GM12878 (cell line): ENCODE measurements at regions of chr16 and their contacts with region 1.

Region 1: GRCh38 chr16:19067349-19068236 is at the start of gene COQ7:
- DNase-seq: peak; percentile 96
- ATAC-seq: peak; percentile 94
- H3K4me3 ChIP-seq: peak within 1 kb of the TSS; percentile 95
- H3K27ac ChIP-seq: peak within 1 kb of the TSS; percentile 99
- H3K4me1 ChIP-seq: no peaks in the 10 kb centered on the region; the same call in 1 of the 2 replicates
- H3K27me3 ChIP-seq: no peaks in the 10 kb centered on the region
- CTCF ChIP-seq: no peak
- EP300 ChIP-seq: 0 out of 4 replicates have a peak, but pooled peaks of 1 of the 2 experiments have one; percentile 69
- POLR2A ChIP-seq: peak; percentile 80
- RAD21 ChIP-seq: no peak
- polyA plus RNA-seq, gene COQ7: 3.2 to 4.3 TPM

Region 2: GRCh38 chr16:18789850-18790724 is 277.5 kb before region 1 on chr16 and contains the start of gene RPS15A:
- CTCF ChIA-PET with region 1: no interaction called
- POLR2A ChIA-PET with region 1: interaction called, 5 read pairs
- RAD21 ChIA-PET with region 1: no interaction called
- SMC1A ChIA-PET with region 1: interaction called, 3 read pairs
- in situ Hi-C with region 1: no loop called
- intact Hi-C with region 1: loop called (anchors 5 kb)
- DNase-seq: peak; percentile 88
- ATAC-seq: peak; percentile 89
- H3K4me3 ChIP-seq: peak within 1 kb of the TSS; percentile 93
- H3K27ac ChIP-seq: peak within 1 kb of the TSS; percentile 91
- H3K4me1 ChIP-seq: peaks cover 10% of the 10 kb centered on the region
- H3K27me3 ChIP-seq: no peaks in the 10 kb centered on the region
- CTCF ChIP-seq: no peak
- EP300 ChIP-seq: 0 out of 4 replicates have a peak, but pooled peaks of 1 of the 2 experiments have one; percentile 8
- POLR2A ChIP-seq: peak; percentile 99
- RAD21 ChIP-seq: no peak
- polyA plus RNA-seq, gene RPS15A: 2,843 to 3,155 TPM

Region 3: DNA sequence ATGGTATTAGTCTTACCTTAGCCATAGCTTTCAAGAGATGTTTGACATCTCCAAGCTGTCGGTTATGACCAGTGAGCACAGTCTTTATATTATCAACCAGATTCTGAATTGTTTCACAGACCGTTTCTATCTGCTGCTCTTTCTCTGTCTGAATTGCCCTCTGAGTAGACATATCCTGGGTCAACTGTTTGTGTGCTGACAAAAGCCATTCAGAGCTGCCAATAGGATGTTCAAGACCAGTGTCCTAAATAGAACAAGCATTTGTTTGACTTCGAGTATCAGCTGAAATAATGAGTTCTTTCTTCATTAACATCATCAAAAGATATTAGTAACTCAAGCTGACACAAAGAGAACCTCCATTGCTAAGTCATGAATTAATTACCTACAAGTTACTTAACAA is 251.3 kb before region 1 on chr16:
- CTCF ChIA-PET with region 1: no interaction called
- POLR2A ChIA-PET with region 1: interaction called, 11 read pairs
- RAD21 ChIA-PET with region 1: no interaction called
- SMC1A ChIA-PET with region 1: no interaction called
- in situ Hi-C with region 1: no loop called
- intact Hi-C with region 1: no loop called
- DNase-seq: no peak
- ATAC-seq: no peak
- H3K4me3 ChIP-seq: no peak overlapping the region
- H3K27ac ChIP-seq: no peak overlapping the region
- H3K4me1 ChIP-seq: no peaks in the 10 kb centered on the region
- H3K27me3 ChIP-seq: no peaks in the 10 kb centered on the region
- CTCF ChIP-seq: no peak
- EP300 ChIP-seq: no peak
- POLR2A ChIP-seq: no peak
- RAD21 ChIP-seq: no peak

Region 4: GRCh38 chr16:19001788-19002187 is 65.8 kb before region 1 on chr16:
- CTCF ChIA-PET with region 1: no interaction called
- POLR2A ChIA-PET with region 1: no interaction called
- RAD21 ChIA-PET with region 1: no interaction called
- SMC1A ChIA-PET with region 1: no interaction called
- in situ Hi-C with region 1: no loop called
- intact Hi-C with region 1: no loop called
- DNase-seq: no peak
- ATAC-seq: no peak
- H3K4me3 ChIP-seq: no peak overlapping the region
- H3K27ac ChIP-seq: no peak overlapping the region
- H3K4me1 ChIP-seq: no peaks in the 10 kb centered on the region
- H3K27me3 ChIP-seq: no peaks in the 10 kb centered on the region; a peak in 1 of 4 replicates
- CTCF ChIP-seq: no peak
- EP300 ChIP-seq: no peak
- POLR2A ChIP-seq: no peak
- RAD21 ChIP-seq: no peak

Region 5: DNA sequence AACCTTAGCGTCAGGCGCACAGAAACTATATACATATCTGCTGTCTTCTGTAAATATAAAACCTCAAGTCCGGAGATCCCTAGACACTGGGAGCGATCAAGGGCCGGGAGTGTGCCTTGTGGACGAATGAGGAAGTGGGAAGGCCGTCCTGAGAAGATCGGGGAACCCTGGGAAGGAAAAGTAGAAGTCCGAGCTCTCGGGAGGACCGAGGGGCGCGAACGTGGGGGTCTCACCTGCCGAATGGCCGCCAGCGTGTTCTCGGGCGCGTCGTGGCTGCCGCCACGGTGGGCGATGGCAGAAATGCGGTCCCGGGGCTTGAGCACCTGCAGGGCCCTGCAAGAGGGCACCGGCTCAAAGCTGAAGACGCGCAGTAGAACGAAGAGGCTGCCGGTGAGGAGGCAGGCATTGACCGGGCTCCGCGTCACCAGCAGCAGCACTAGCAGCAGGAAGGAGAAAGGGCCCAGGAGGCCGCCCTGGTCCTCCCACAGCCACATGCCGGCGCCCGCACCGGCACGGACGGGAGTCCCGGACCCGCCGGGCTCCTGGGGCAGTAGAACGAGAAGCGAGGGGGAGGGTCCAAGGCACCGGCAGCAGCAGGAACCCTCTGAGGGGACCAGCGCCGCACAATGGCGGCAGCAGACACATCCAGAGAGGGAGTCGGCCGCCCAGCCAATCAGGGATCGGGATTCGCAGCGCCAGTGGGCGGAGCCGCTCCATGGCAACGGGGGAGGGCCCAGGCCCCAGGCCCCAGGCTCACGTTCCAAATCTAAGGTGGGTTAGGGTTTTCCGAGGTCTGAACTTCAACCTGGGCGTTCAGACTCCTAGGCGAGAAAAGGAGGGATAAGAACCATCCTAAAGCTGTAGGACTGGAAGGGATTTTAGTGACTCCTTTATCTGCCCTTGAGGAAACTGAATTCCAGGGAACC is 454.1 kb after region 1 on chr16 and contains the start of gene GDE1:
- CTCF ChIA-PET with region 1: no interaction called
- POLR2A ChIA-PET with region 1: no interaction called
- RAD21 ChIA-PET with region 1: no interaction called
- SMC1A ChIA-PET with region 1: no interaction called
- in situ Hi-C with region 1: no loop called
- intact Hi-C with region 1: loop called (anchors 5 kb)
- DNase-seq: peak; percentile 64
- ATAC-seq: peak; percentile 77
- H3K4me3 ChIP-seq: peak within 1 kb of the TSS; percentile 81
- H3K27ac ChIP-seq: peak within 1 kb of the TSS; percentile 74
- H3K4me1 ChIP-seq: peaks cover 14% of the 10 kb centered on the region
- H3K27me3 ChIP-seq: no peaks in the 10 kb centered on the region
- CTCF ChIP-seq: peak; percentile 39 to 61 (median 50); a peak in 5 of 6 replicates
- EP300 ChIP-seq: no peak
- POLR2A ChIP-seq: peak; percentile 89
- RAD21 ChIP-seq: no peak
- polyA plus RNA-seq, gene GDE1: 14.8 to 17.3 TPM